H1 (cell line): ENCODE measurements at regions of chr7 and their contacts with region 1.

Region 1: DNA sequence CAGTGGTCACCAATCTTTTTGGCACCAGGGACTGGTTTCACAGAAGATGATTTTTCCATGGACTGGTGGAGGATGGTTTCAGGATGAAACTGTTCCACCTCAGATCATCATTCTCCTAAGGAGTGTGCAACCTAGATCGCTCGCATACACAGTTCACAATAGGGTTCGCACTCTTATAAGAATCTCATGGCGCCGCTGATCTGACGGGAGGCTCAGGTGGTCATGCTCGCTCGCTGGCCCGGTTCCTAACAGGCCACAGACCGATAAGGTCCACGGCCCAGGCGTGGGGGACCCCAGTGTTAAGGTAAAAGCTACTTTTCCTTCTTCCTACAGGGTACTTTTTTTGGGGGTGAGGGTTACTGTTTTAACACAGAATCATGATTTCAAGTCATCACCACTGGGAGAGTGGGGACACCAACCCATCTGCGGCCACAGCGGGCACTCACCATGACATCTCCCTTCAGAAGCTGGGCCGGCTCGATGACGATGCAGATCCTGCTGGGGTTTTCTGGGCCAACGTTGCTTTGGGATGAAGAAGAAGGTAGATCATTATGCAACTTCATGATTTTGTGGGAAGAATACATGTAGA is 170.5 kb downstream of the TNS3 start:
- DNase-seq: no peak
- H3K4me3 ChIP-seq: no peak overlapping the region
- H3K27ac ChIP-seq: no peak overlapping the region
- H3K4me1 ChIP-seq: no peaks in the 10 kb centered on the region
- H3K27me3 ChIP-seq: no peaks in the 10 kb centered on the region
- CTCF ChIP-seq: no peak
- EP300 ChIP-seq: no peak
- POLR2A ChIP-seq: no peak
- RAD21 ChIP-seq: no peak

Region 2: DNA sequence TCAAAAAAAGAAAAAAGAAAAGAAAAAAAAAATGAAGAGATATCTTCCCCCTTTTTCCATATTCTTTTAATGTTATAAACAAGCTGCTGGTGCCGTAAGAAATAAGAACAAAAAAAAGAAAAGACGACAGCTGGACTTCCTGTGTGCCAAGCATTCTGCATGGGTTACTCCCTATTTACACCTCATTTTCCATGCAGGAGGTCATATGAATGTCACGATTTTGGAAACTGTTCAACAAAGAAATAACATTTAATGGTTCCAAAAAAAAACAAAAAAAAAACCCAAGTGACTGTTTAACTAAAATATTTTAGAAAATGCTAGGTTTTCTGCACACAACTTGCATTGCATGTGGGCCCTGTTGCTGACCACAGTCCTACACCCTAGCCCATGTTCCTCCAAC is 11.2 kb after region 1 on chr7:
- CTCF ChIA-PET with region 1: interaction called, 10 read pairs
- POLR2A ChIA-PET with region 1: no interaction called
- DNase-seq: no peak
- H3K4me3 ChIP-seq: no peak overlapping the region
- H3K27ac ChIP-seq: no peak overlapping the region
- H3K4me1 ChIP-seq: no peaks in the 10 kb centered on the region
- H3K27me3 ChIP-seq: no peaks in the 10 kb centered on the region
- CTCF ChIP-seq: no peak
- EP300 ChIP-seq: no peak
- POLR2A ChIP-seq: no peak
- RAD21 ChIP-seq: no peak